ENCODE measurements at regions of chr17 and their contacts with region 1.

Region 1: GRCh38 chr17:78970834-78971773 is 8.6 kb downstream of the LGALS3BP start:
- DNase-seq: no peak
- H3K4me3 ChIP-seq: no peak overlapping the region
- H3K27me3 ChIP-seq: no peaks in the 10 kb centered on the region
- CTCF ChIP-seq: peak; percentile 83

Region 2: GRCh38 chr17:78645421-78646295 is 325.4 kb before region 1 on chr17:
- CTCF ChIA-PET with region 1: no interaction called
- POLR2A ChIA-PET with region 1: no interaction called
- DNase-seq: no peak
- H3K4me3 ChIP-seq: no peak overlapping the region
- H3K27me3 ChIP-seq: peaks cover 7% of the 10 kb centered on the region
- CTCF ChIP-seq: no peak

Region 3: DNA sequence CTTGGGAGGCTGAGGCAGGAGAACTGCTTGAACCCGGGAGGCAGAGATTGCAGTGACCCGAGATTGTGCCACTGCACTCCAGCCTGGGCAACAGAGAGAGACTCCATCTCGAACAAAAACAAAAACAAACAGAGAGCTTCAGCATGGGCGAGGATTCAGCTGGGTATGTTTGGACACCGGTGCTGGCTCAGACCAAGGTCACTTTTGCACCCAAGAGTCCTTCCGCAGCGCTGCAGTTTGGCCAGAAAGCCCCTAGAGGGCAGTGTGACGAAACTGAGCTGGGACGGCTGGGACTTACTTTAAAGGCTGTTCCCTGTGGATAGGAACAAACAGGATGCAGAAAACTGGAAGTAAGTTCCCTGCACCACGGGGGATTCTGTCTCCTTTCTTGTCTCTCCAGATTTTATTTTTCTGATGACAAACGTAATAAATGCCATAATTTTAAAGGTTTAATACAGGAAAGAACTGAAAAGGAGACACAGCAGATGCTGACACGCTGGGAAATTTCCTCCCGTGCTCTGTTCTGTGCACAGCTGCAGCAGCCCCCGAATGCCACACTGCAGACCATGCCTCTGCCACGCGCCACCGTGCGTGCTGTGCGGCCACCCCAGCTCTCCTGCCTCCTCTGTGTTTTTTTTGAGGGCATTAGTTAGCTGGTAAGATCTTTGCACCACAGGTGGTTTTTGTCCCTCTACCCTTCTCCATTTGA is 105.3 kb before region 1 on chr17:
- CTCF ChIA-PET with region 1: interaction called, 63 read pairs
- POLR2A ChIA-PET with region 1: no interaction called
- DNase-seq: no peak
- H3K4me3 ChIP-seq: no peak overlapping the region
- H3K27me3 ChIP-seq: no peaks in the 10 kb centered on the region
- CTCF ChIP-seq: peak; percentile 92

Region 4: GRCh38 chr17:78883164-78884122 is 87.7 kb before region 1 on chr17:
- CTCF ChIA-PET with region 1: interaction called, 27 read pairs
- POLR2A ChIA-PET with region 1: no interaction called
- DNase-seq: peak; percentile 88
- H3K4me3 ChIP-seq: peak overlapping the region; percentile 31
- H3K27me3 ChIP-seq: no peaks in the 10 kb centered on the region
- CTCF ChIP-seq: no peak

Region 5: DNA sequence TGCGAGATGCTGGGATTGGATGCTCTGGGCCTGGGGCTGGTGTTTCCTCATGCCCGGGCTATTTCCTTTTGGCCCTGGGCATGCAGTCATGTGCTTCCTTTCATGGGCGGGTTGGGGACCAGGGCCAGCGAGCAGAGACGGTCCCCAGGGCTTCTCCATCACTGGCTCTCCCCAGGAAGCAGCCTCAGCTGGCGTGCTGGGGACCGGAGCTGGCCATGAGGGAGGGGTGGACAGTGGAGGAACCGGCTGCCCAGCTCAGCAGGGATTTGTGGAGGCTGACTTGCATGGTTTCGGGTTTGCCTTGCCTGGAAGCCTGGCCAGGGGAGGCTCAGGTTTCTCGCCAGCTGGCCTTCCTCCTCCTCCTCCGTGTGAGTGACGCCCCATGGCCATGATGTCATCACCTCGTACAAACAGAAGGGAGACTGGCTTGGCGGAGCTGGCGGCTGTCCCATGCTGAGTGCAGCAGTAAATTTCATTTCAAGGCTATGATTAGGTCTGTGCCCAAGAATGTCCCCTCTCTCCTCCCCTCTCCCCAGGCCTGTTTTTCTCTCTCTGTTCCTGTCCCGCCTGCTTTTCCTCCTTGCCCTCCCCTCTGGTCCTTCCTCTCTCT is 37.0 kb before region 1 on chr17:
- CTCF ChIA-PET with region 1: interaction called, 15 read pairs
- POLR2A ChIA-PET with region 1: no interaction called
- DNase-seq: peak; percentile 97
- H3K4me3 ChIP-seq: peak overlapping the region; percentile 9; the same call in 1 of the 2 replicates
- H3K27me3 ChIP-seq: no peaks in the 10 kb centered on the region
- CTCF ChIP-seq: no peak

Region 6: GRCh38 chr17:78953356-78954265 is 17.5 kb before region 1 on chr17:
- CTCF ChIA-PET with region 1: interaction called, 40 read pairs
- POLR2A ChIA-PET with region 1: no interaction called
- DNase-seq: no peak
- H3K4me3 ChIP-seq: no peak overlapping the region
- H3K27me3 ChIP-seq: no peaks in the 10 kb centered on the region; the same call in 1 of the 2 replicates
- CTCF ChIP-seq: no peak

Region 7: GRCh38 chr17:78986048-78986648 is 15.0 kb after region 1 on chr17:
- CTCF ChIA-PET with region 1: interaction called, 10 read pairs
- POLR2A ChIA-PET with region 1: interaction called, 11 read pairs
- DNase-seq: no peak
- H3K4me3 ChIP-seq: no peak overlapping the region; the same call in 1 of the 2 replicates
- H3K27me3 ChIP-seq: no peaks in the 10 kb centered on the region
- CTCF ChIP-seq: peak; percentile 25; the same call in 1 of the 2 replicates

Region 8: GRCh38 chr17:79109570-79109969 is 138.5 kb after region 1 on chr17:
- CTCF ChIA-PET with region 1: no interaction called
- POLR2A ChIA-PET with region 1: no interaction called
- DNase-seq: no peak
- H3K4me3 ChIP-seq: no peak overlapping the region
- H3K27me3 ChIP-seq: peaks cover 19% of the 10 kb centered on the region
- CTCF ChIP-seq: 0 out of 2 replicates have a peak, but pooled peaks have one; percentile 19

Measured in BJ (cell line).